CD4-positive, alpha-beta T cell (primary cell): ENCODE measurements at regions of chr12 and their contacts with region 1.

Region 1: GRCh38 chr12:45076417-45077026 is 25.6 kb upstream of the DBX2 start:
- DNase-seq: no peak
- ATAC-seq: no peak
- H3K4me3 ChIP-seq: no peak overlapping the region
- H3K4me3 Mint-ChIP-seq: no peak overlapping the region
- H3K27ac ChIP-seq: no peak overlapping the region
- H3K27ac Mint-ChIP-seq: no peak overlapping the region
- H3K4me1 ChIP-seq: no peaks in the 10 kb centered on the region
- H3K4me1 Mint-ChIP-seq: no peaks in the 10 kb centered on the region
- H3K27me3 ChIP-seq: no peaks in the 10 kb centered on the region
- H3K27me3 Mint-ChIP-seq: peaks cover 13% of the 10 kb centered on the region
- CTCF ChIP-seq: no peak

Region 2: GRCh38 chr12:44551631-44552030 is 524.9 kb before region 1 on chr12:
- CTCF ChIA-PET with region 1: no interaction called
- POLR2A ChIA-PET with region 1: no interaction called
- intact Hi-C with region 1: no loop called
- DNase-seq: no peak
- ATAC-seq: no peak
- H3K4me3 ChIP-seq: no peak overlapping the region
- H3K4me3 Mint-ChIP-seq: no peak overlapping the region
- H3K27ac ChIP-seq: no peak overlapping the region
- H3K27ac Mint-ChIP-seq: no peak overlapping the region
- H3K4me1 ChIP-seq: no peaks in the 10 kb centered on the region
- H3K4me1 Mint-ChIP-seq: peaks cover 14% of the 10 kb centered on the region
- H3K27me3 ChIP-seq: no peaks in the 10 kb centered on the region
- H3K27me3 Mint-ChIP-seq: no peaks in the 10 kb centered on the region
- CTCF ChIP-seq: no peak

Region 3: GRCh38 chr12:46874642-46875041 is 1798.1 kb after region 1 on chr12:
- CTCF ChIA-PET with region 1: no interaction called
- POLR2A ChIA-PET with region 1: no interaction called
- intact Hi-C with region 1: loop called in 1 of 2 experiments (anchors 5 kb)
- DNase-seq: no peak
- ATAC-seq: no peak
- H3K4me3 ChIP-seq: no peak overlapping the region
- H3K4me3 Mint-ChIP-seq: no peak overlapping the region
- H3K27ac ChIP-seq: no peak overlapping the region
- H3K27ac Mint-ChIP-seq: no peak overlapping the region
- H3K4me1 ChIP-seq: no peaks in the 10 kb centered on the region
- H3K4me1 Mint-ChIP-seq: no peaks in the 10 kb centered on the region
- H3K27me3 ChIP-seq: peaks cover 6 to 9% of the 10 kb centered on the region in 2 experiments
- H3K27me3 Mint-ChIP-seq: peaks cover 16% of the 10 kb centered on the region
- CTCF ChIP-seq: no peak